Aorta (tissue), 5 donors: ENCODE measurements at regions of chr16 and their contacts with region 1.

Region 1: DNA sequence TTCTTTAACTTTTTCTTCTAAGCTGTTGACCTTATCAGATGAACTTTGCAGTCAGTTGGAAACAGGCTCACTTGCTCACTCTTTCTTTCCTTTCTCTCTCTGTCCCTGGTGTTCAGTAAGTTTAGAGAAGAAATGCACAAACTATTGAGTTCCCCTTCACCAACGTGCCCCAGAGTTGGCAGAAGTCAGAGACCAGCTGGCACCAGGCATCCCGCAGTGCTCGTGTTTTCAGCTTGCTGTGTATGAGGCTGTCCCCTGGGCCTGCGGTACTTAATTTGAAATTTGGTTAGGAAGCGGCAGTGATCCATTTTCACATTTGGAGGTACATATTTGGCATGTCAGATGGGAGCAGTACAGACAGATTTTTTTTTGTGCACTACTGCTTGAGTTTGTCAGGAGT is 258.6 kb downstream of the SNX29 start:
- DNase-seq: no peak
- ATAC-seq: no peak
- H3K4me3 ChIP-seq: no peak overlapping the region
- H3K27ac ChIP-seq: peak overlapping the region in 1 of 2 donors; percentile 21
- H3K4me1 ChIP-seq: peaks cover 0 to 4% of the 10 kb centered on the region in 2 donors
- H3K27me3 ChIP-seq: no peaks in the 10 kb centered on the region

Region 2: DNA sequence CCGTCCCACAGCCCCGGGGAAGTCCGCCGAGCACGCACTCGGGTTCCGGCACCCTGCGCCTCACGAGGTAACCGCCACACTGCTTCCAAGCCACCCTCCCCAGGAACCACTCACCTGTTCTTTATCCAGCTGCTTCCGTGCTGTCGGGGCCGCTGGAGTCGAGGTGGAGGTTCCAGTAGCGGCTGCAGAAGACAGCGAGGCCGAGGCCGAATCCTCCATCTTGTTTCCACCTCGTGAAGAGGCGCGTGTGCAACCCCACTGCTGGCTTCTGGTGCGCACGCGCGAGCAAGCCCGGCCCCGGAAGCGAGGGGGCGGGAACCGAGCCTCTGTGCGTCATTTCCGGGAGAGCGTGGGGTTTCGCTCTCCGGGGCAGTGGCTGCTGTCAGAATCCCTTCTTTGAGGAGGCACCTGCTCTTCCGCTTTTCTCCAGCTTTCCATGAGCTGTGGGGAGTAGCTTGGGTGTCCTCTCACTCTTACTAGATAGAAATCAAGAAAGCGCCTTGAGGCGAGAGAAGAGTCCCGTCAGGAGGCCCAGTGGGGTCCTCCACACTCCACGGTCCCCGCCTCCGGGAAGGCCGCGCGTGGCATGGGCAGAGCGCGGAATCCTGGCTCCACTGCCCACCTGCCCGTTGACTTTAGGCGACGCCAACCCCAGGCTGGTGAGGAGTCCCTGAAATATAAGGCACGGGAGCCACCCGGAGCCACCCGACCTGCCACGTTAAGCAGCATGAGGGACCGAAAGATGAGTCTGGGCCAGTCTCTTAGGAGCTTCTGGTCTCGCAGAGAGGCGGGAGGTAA is 383.6 kb before region 1 on chr16 and contains the start of gene RSL1D1:
- intact Hi-C with region 1: no loop called
- DNase-seq: peak; percentile 93 to 97
- ATAC-seq: peak; percentile 98
- H3K4me3 ChIP-seq: peak within 1 kb of the TSS; percentile 51 to 66
- H3K27ac ChIP-seq: peak within 1 kb of the TSS in 1 of 2 donors; percentile 15
- H3K4me1 ChIP-seq: peaks cover 3 to 4% of the 10 kb centered on the region in 2 donors
- H3K27me3 ChIP-seq: no peaks in the 10 kb centered on the region
- total RNA-seq, gene RSL1D1: 83.1 to 95.5 TPM

Region 3: GRCh38 chr16:12289175-12290063 is 54.3 kb after region 1 on chr16:
- intact Hi-C with region 1: loop called in 1 of 2 experiments (anchors 5 kb)
- DNase-seq: no peak
- ATAC-seq: no peak
- H3K4me3 ChIP-seq: no peak overlapping the region
- H3K27ac ChIP-seq: peak overlapping the region in 1 of 2 donors; percentile 52
- H3K4me1 ChIP-seq: peaks cover 0 to 5% of the 10 kb centered on the region in 2 donors
- H3K27me3 ChIP-seq: no peaks in the 10 kb centered on the region